Breast epithelium (tissue), 4 donors: ENCODE measurements at regions of chr9 and their contacts with region 1.

Region 1: GRCh38 chr9:116365056-116365471 is 211.5 kb downstream of the PAPPA start:
- DNase-seq: peak in 1 of 2 donors; percentile 27
- H3K4me3 ChIP-seq: peak overlapping the region in 2 of 3 donors; percentile 10 to 41
- H3K27ac ChIP-seq: peak overlapping the region in 1 of 2 donors; percentile 59
- H3K4me1 ChIP-seq: no peaks in the 10 kb centered on the region
- H3K27me3 ChIP-seq: no peaks in the 10 kb centered on the region
- CTCF ChIP-seq: no peak
- POLR2A ChIP-seq: no peak

Region 2: GRCh38 chr9:116350187-116350586 is 14.9 kb before region 1 on chr9:
- intact Hi-C with region 1: no loop called
- DNase-seq: no peak
- H3K4me3 ChIP-seq: no peak overlapping the region
- H3K27ac ChIP-seq: no peak overlapping the region
- H3K4me1 ChIP-seq: no peaks in the 10 kb centered on the region
- H3K27me3 ChIP-seq: no peaks in the 10 kb centered on the region
- CTCF ChIP-seq: no peak
- POLR2A ChIP-seq: no peak

Region 3: GRCh38 chr9:117434566-117434965 is 1069.5 kb after region 1 on chr9:
- intact Hi-C with region 1: loop called (anchors 10 kb)
- DNase-seq: no peak
- H3K4me3 ChIP-seq: no peak overlapping the region
- H3K27ac ChIP-seq: no peak overlapping the region
- H3K4me1 ChIP-seq: no peaks in the 10 kb centered on the region
- H3K27me3 ChIP-seq: no peaks in the 10 kb centered on the region
- CTCF ChIP-seq: no peak
- POLR2A ChIP-seq: no peak